ENCODE measurements at regions of chr15 and their contacts with region 1.

Region 1: DNA sequence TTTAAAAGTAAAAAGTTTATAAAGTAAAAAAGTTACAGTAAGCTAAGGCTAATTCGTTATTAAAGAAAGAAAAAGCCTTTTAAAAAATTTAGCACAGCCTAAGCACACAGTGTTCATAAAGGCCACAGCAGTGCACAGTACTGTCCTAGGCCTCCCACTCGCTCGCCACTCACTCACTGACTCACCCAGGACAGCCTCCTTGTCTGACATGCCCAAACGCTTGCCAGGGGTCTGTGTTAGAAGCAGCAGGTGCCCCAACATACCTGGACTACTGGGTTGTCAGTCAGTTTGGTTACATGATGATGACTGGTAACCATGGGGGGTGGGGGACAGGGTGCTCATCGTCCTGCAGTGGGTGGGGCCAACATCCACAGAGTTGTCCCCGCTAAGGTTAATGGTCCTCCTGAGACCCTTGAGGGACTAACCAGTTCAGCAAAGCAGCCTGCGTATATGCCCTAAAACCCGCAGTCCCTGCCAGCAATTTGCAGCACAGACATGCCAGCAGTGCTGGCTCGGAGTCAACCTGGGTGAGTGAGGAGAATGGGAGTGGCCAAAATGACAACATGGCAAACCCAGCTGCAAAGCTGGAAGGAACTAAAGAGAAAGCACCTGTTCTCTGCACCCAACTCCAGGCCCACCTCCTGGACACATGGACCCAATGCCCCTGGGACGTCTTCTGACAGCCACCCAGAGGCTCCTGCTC is 49.2 kb downstream of the CYFIP1 start:
- DNase-seq: peak; percentile 62
- H3K4me3 ChIP-seq: no peak overlapping the region
- H3K27ac ChIP-seq: no peak overlapping the region
- H3K4me1 ChIP-seq: peaks cover 12% of the 10 kb centered on the region
- H3K27me3 ChIP-seq: no peaks in the 10 kb centered on the region
- CTCF ChIP-seq: no peak

Region 2: GRCh38 chr15:22895469-22896190 is 35.3 kb before region 1 on chr15:
- CTCF ChIA-PET with region 1: no interaction called
- dilution Hi-C with region 1: no loop called
- in situ Hi-C with region 1: no loop called
- intact Hi-C with region 1: loop called (anchors 5 kb)
- DNase-seq: peak; percentile 96
- H3K4me3 ChIP-seq: no peak overlapping the region
- H3K27ac ChIP-seq: peak overlapping the region; percentile 52
- H3K4me1 ChIP-seq: peaks cover 12% of the 10 kb centered on the region
- H3K27me3 ChIP-seq: no peaks in the 10 kb centered on the region
- CTCF ChIP-seq: peak; percentile 6 to 7

Region 3: GRCh38 chr15:22995690-22996089 is 64.8 kb after region 1 on chr15:
- CTCF ChIA-PET with region 1: no interaction called
- dilution Hi-C with region 1: no loop called
- in situ Hi-C with region 1: no loop called
- intact Hi-C with region 1: no loop called
- DNase-seq: no peak
- H3K4me3 ChIP-seq: no peak overlapping the region
- H3K27ac ChIP-seq: no peak overlapping the region
- H3K4me1 ChIP-seq: no peaks in the 10 kb centered on the region
- H3K27me3 ChIP-seq: no peaks in the 10 kb centered on the region
- CTCF ChIP-seq: no peak

Region 4: DNA sequence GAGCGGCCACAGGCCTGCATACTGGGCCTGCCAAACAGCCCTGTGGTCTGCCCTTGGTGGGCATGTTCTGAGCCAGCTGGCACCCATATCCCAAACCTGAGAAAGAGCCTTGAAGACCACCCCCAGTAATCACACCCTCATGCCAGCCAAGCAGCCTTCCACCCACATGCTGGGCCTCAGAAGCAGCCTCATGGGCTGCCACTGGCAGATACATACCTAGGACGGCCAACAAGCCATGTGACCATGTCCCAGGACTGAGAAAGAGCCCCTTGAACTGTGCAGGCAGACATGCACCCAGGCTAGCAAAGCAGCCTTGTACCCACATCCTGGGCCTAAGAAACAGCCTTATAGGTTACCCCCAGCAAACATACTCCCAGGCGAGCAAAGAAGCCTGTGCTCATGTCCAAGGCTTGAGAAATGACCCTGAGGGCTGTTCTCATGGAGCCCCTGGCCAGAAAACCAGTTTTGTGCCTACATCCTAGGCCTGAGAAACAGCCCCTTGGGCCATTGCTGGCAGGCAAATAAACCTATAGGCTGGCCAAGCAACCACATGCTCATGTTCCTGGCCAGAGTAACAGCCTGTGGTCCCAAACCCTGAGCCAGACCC is 83.6 kb after region 1 on chr15:
- CTCF ChIA-PET with region 1: no interaction called
- dilution Hi-C with region 1: no loop called
- in situ Hi-C with region 1: no loop called
- intact Hi-C with region 1: no loop called
- DNase-seq: no peak
- H3K4me3 ChIP-seq: no peak overlapping the region
- H3K27ac ChIP-seq: no peak overlapping the region
- H3K4me1 ChIP-seq: no peaks in the 10 kb centered on the region
- H3K27me3 ChIP-seq: no peaks in the 10 kb centered on the region
- CTCF ChIP-seq: no peak

Region 5: GRCh38 chr15:24748812-24749439 is 1818.0 kb after region 1 on chr15:
- CTCF ChIA-PET with region 1: interaction called, 17 read pairs
- dilution Hi-C with region 1: no loop called
- in situ Hi-C with region 1: no loop called
- intact Hi-C with region 1: no loop called
- DNase-seq: no peak
- H3K4me3 ChIP-seq: no peak overlapping the region
- H3K27ac ChIP-seq: no peak overlapping the region
- H3K4me1 ChIP-seq: no peaks in the 10 kb centered on the region
- H3K27me3 ChIP-seq: no peaks in the 10 kb centered on the region
- CTCF ChIP-seq: no peak

Measured in mammary epithelial cell (primary cell).